Calu3 (cell line): ENCODE measurements at regions of chr15 and their contacts with region 1.

Region 1: DNA sequence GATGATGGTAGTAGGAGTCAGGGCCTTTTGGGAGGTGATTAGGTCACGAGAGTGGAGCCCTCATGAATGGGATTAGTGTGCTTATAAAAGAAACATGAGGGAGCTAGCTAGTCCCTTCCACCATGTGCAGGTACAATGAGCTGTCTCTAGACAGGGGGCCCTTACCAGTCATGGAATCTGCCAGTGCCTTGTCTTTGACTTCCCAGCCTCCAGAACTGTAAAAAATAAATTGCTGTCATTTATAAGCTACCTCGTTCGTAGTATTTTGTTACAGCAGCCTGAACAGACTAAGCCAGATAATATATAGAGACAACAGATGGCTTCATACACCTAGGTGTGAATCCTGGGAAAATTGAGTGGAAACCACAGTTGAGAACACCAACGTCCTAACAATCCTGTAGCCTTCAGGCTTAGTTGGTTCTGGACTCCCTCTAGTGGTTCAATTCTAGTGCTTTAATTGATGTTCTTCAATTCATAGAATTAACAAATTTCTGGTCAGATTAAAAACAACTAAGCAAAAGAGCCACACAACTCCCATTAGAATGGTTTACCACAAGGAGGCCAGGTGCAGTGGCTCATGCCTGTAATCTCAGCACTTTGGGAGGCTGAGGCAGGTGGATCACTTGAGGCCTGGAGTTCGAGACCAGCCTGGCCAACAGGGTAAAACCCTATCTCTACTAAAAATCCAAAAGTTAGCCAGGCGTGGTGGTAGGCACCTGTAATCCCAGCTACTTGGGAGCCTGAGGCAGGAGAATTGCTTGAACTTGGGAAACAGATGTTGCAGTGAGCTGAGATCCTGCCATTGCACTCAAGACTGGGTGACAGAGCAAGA is 21.3 kb upstream of the GATM start:
- DNase-seq: no peak
- H3K4me3 Mint-ChIP-seq: no peak overlapping the region
- H3K27ac Mint-ChIP-seq: no peak overlapping the region
- H3K4me1 Mint-ChIP-seq: peaks cover 21% of the 10 kb centered on the region
- H3K27me3 Mint-ChIP-seq: no peaks in the 10 kb centered on the region
- CTCF ChIP-seq: peak; percentile 49

Region 2: GRCh38 chr15:45205192-45205591 is 194.4 kb before region 1 on chr15:
- CTCF ChIA-PET with region 1: interaction called, 8 read pairs
- intact Hi-C with region 1: loop called (anchors 2 kb)
- DNase-seq: peak; percentile 78
- H3K4me3 Mint-ChIP-seq: no peak overlapping the region
- H3K27ac Mint-ChIP-seq: no peak overlapping the region
- H3K4me1 Mint-ChIP-seq: no peaks in the 10 kb centered on the region
- H3K27me3 Mint-ChIP-seq: no peaks in the 10 kb centered on the region
- CTCF ChIP-seq: peak; percentile 75

Region 3: DNA sequence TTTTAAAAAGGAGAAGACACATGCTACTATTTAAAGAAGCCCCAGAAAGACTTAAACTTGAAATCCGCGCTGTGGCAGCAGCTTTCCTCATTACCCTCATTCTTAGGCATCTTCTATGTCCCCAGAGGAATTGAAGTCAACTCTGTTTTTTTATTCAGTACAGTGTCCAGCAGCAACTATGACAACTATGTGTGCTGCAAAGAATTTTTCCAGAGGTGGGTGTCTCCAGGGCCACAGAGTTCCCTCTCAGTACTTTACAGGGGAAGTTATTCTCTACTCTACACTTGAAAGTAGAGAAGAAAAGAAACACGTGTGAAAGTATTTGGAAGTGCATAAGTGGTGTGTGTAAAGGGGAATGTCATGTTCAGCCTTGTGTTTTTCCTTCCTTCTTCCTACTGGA is 53.2 kb before region 1 on chr15:
- CTCF ChIA-PET with region 1: no interaction called
- intact Hi-C with region 1: loop called (anchors 10 kb)
- DNase-seq: no peak
- H3K4me3 Mint-ChIP-seq: no peak overlapping the region
- H3K27ac Mint-ChIP-seq: peak overlapping the region; percentile 21
- H3K4me1 Mint-ChIP-seq: peaks cover 42% of the 10 kb centered on the region
- H3K27me3 Mint-ChIP-seq: no peaks in the 10 kb centered on the region
- CTCF ChIP-seq: no peak

Region 4: GRCh38 chr15:45448066-45448510 is 48.5 kb after region 1 on chr15:
- CTCF ChIA-PET with region 1: no interaction called
- intact Hi-C with region 1: no loop called
- DNase-seq: peak; percentile 68
- H3K4me3 Mint-ChIP-seq: peak overlapping the region; percentile 79
- H3K27ac Mint-ChIP-seq: peak overlapping the region; percentile 98
- H3K4me1 Mint-ChIP-seq: peaks cover 62% of the 10 kb centered on the region
- H3K27me3 Mint-ChIP-seq: no peaks in the 10 kb centered on the region
- CTCF ChIP-seq: no peak